ENCODE measurements at regions of chr16 and their contacts with region 1.

Region 1: GRCh38 chr16:48373258-48374029 is 11.8 kb downstream of the SIAH1 start:
- DNase-seq: no peak

Region 2: DNA sequence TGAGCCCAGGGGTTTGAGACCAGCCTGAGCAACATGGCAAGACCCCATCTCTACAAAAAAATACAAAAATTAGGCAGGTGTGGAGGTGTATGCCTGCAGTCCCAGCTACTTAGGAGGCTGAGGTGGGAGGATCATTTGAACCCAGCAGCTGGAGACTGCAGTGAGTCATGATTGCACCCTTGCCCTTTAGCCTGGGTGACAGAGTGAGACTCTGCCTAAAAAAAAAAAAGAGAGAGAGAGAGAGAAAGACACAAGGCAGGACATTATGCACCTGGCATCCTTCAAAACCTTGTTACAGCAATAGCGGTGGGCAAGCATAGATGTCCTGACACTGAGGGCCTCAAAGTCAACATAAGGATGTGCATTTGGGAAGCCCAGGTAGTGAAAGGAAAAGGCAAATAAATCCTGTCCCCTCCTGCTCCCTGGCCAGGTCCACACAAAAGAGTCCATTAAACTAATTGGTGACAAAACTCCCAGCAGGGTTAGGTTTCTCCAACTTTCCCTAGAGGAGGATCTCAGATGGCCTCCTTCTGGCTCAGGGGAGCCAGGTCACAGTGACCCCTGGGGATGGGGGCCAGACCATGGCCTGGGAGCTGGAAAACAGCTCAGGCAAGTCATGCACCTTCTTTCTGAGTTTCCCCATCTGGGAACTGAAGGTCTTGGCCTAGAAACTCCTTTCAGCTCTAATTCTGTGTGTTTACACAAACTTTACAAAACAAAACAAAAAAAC is 31.9 kb after region 1 on chr16:
- CTCF ChIA-PET with region 1: no interaction called
- POLR2A ChIA-PET with region 1: no interaction called
- DNase-seq: no peak

Region 3: DNA sequence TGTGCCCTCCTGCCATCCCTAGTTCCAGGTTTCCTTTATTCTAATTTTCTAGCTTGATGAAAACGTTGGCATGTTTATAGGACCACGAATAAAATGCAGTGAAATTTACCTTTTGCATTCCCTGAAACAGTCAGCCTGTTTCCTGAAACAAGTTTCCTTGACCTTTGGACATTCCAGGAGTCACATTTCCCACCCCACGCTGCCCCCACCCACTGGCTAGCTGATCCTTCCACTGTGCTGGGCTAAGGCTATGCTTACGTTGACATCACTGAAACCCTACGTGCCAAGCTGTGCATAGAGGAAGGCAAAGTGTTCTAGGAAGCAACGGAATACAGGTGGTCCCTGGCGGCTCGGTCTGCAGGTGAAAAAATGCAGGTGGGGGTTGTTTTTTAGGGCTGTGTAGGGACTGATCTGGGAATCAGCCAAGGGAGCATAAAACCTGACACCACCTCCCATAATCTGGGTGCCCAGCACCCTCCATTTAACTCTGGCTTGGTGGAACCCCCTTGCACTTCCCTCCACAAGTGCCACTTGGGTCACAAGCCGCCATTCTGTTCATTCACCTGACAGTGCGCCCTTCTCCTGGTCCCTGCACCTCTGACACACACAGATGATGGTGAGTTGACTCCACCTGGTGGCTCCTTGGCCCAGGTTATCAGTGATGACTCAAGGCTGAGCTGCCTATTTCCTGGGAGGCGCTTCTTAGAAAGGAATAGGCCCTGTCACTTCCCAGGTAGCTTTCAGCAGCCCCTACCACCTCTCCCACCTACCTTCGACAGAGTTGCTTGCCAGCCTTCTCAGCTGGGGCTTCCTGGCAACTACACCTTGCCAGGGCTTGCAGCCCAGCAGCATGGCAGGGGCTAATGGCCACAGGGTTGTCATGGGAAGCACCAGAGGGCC is 152.9 kb after region 1 on chr16:
- CTCF ChIA-PET with region 1: interaction called, 11 read pairs
- POLR2A ChIA-PET with region 1: no interaction called
- DNase-seq: no peak